Sciatic nerve (tissue), 2 donors: ENCODE measurements at regions of chr22 and their contacts with region 1.

Region 1: DNA sequence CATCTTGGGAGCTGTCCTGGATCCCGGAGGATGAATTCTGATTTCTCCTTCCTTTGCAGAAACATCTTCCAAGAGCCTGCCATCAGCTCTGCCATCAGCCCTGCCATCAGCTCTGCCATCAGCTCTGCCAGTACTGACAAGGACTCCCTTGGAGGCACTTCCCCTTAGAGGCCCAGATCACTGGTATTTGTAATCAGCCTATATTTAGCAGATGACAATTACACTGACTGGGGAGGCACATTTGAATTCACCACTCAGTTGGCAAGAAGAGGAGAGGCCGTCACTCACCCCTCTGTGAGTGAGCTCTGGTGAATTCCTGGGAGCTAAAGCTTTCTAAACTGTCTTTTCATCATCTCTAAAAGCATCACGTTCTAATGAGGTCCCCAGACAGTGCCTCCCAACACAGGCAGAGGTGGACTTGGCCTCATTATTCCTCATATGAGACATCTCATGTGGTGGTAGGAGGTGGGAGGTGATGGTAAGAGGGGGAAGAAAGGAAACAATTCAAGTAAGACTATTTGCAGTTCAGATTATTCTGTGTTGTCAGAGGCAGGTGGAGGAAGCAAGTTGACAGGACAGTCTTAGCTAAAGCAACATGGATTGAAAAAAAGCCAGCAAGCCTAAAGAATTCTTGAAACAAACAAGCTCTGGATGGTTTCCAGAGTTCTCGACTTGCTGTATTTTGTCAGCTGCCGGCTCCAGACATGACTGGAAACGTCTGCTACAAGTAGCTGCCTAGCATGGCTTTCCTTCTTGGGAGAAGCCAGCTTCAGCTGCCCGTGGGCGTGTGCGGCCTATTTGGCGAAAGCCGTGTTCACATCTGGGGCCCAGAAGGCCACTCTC is 771.7 kb downstream of the TBC1D22A start:
- DNase-seq: no peak
- ATAC-seq: peak; percentile 77

Region 2: DNA sequence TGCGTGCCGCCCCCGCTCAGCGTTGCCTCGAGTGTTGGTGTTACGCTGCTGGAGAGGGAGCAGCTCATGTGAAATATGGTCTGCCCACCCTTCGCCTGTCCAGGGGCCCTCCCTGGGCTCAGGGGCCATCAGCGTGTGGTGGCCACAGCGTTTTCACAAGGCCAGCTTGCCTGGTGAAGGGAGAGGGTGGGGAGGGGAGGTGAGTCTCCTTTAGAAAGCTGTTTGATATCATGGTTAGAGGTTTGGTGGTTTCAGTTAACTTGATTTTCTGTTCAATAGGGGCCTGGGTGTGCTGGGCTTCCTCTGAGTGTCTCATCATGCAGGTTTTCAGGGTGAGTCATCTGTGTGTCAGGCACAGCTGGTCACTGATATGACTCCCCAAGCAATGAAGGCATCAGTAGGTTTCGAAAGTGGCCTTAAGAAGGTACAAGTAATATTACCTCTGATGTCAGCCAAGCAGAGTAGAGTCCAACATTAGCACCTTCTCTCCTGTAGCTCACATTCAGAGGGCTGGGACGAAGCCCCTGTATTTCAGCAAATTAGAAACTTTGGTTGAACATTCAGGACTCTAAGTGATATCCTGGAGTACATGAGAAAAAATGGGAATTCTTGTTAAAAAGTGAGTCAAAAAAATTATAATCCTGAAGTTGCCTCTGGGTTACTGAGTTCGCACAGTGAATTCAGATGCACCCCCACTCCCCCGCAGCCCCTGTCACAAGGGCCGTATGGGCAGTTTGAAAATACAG is 599.3 kb before region 1 on chr22:
- intact Hi-C with region 1: loop called (anchors 5 kb)
- DNase-seq: no peak
- ATAC-seq: no peak

Region 3: DNA sequence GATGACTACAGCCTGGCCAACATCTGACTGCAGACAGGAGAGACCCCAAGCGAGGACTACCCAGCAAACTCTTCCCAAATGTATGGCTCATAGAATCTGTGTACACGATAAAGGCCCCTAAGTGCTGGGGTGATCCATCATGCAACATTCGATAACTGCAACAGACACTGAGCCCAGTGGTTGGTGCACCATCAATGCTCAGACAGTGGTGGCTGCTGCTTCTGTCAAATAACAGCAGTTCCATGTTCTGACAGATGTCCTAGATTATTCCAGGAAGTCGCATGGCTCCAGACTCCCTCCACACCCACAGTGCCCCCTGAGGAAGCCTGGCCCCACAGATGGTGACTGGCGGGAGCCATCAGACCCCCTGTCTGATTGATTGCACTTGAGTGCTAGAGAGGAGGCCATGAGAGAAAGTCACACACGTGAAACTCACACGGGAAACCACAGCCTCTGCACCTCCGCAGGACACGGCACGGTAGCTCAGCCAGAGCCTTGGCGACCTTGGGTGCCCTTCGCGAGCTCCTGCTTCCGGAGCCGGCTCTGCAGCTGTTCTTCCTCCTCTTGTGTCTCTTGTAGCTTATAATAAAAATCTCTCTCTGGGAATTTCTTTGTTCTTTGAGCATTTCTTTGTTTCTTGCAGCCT is 384.2 kb after region 1 on chr22:
- intact Hi-C with region 1: no loop called
- DNase-seq: no peak
- ATAC-seq: no peak